ENCODE measurements at regions of chr1 and their contacts with region 1.

Region 1: GRCh38 chr1:31789259-31790065 is 25.3 kb upstream of the ADGRB2 start:
- DNase-seq: peak; percentile 91
- H3K4me3 ChIP-seq: peak overlapping the region; percentile 4 to 78 (median 55)
- H3K27ac ChIP-seq: no peak overlapping the region
- H3K4me1 ChIP-seq: peaks cover 4% of the 10 kb centered on the region
- H3K27me3 ChIP-seq: no peaks in the 10 kb centered on the region
- CTCF ChIP-seq: peak; percentile 70 to 93
- POLR2A ChIP-seq: peak; percentile 32

Region 2: GRCh38 chr1:31182352-31182751 is 607.1 kb before region 1 on chr1:
- CTCF ChIA-PET with region 1: interaction called, 8 read pairs
- POLR2A ChIA-PET with region 1: no interaction called
- dilution Hi-C with region 1: no loop called
- intact Hi-C with region 1: loop called (anchors 2 kb)
- DNase-seq: peak; percentile 68
- H3K4me3 ChIP-seq: no peak overlapping the region
- H3K27ac ChIP-seq: no peak overlapping the region
- H3K4me1 ChIP-seq: no peaks in the 10 kb centered on the region
- H3K27me3 ChIP-seq: peaks cover 3 to 4% of the 10 kb centered on the region in 2 experiments
- CTCF ChIP-seq: peak; percentile 7 to 25
- POLR2A ChIP-seq: no peak

Region 3: GRCh38 chr1:31564134-31564989 is 225.1 kb before region 1 on chr1:
- CTCF ChIA-PET with region 1: interaction called, 3 read pairs
- POLR2A ChIA-PET with region 1: no interaction called
- dilution Hi-C with region 1: no loop called
- intact Hi-C with region 1: loop called (anchors 2 kb)
- DNase-seq: peak; percentile 83
- H3K4me3 ChIP-seq: no peak overlapping the region
- H3K27ac ChIP-seq: no peak overlapping the region
- H3K4me1 ChIP-seq: peaks cover 19% of the 10 kb centered on the region
- H3K27me3 ChIP-seq: no peaks in the 10 kb centered on the region
- CTCF ChIP-seq: peak; percentile 74 to 76
- POLR2A ChIP-seq: no peak

Region 4: DNA sequence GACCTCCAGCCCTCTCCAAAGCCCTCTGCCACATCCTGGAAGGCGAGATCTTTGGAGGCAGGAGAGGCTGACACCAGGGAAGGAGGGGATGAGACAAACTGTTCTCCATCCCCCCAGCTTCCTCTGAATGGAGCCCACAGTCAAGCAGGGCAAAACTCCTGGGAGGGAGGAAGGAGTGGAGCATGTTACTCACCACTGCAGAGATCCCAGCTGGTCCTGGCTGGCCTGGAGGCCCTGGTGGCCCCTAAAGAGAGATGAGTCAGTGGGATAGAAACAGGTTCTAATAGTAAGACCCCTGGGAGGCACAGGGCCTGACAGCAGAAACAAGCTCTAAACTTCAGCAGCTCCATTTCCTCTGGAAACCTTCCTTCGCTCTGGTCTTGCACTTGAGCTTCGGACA is 130.7 kb before region 1 on chr1:
- CTCF ChIA-PET with region 1: interaction called, 76 read pairs
- POLR2A ChIA-PET with region 1: interaction called, 3 read pairs
- dilution Hi-C with region 1: no loop called
- intact Hi-C with region 1: no loop called
- DNase-seq: no peak
- H3K4me3 ChIP-seq: no peak overlapping the region
- H3K27ac ChIP-seq: no peak overlapping the region
- H3K4me1 ChIP-seq: no peaks in the 10 kb centered on the region
- H3K27me3 ChIP-seq: no peaks in the 10 kb centered on the region
- CTCF ChIP-seq: no peak
- POLR2A ChIP-seq: no peak

Region 5: GRCh38 chr1:31705080-31705866 is 84.2 kb before region 1 on chr1:
- CTCF ChIA-PET with region 1: interaction called, 14 read pairs
- POLR2A ChIA-PET with region 1: no interaction called
- dilution Hi-C with region 1: no loop called
- intact Hi-C with region 1: no loop called
- DNase-seq: no peak
- H3K4me3 ChIP-seq: no peak overlapping the region
- H3K27ac ChIP-seq: no peak overlapping the region
- H3K4me1 ChIP-seq: peaks cover 9% of the 10 kb centered on the region
- H3K27me3 ChIP-seq: peaks cover 0 to 3% of the 10 kb centered on the region in 2 experiments
- CTCF ChIP-seq: peak; percentile 5 to 12
- POLR2A ChIP-seq: no peak

Region 6: DNA sequence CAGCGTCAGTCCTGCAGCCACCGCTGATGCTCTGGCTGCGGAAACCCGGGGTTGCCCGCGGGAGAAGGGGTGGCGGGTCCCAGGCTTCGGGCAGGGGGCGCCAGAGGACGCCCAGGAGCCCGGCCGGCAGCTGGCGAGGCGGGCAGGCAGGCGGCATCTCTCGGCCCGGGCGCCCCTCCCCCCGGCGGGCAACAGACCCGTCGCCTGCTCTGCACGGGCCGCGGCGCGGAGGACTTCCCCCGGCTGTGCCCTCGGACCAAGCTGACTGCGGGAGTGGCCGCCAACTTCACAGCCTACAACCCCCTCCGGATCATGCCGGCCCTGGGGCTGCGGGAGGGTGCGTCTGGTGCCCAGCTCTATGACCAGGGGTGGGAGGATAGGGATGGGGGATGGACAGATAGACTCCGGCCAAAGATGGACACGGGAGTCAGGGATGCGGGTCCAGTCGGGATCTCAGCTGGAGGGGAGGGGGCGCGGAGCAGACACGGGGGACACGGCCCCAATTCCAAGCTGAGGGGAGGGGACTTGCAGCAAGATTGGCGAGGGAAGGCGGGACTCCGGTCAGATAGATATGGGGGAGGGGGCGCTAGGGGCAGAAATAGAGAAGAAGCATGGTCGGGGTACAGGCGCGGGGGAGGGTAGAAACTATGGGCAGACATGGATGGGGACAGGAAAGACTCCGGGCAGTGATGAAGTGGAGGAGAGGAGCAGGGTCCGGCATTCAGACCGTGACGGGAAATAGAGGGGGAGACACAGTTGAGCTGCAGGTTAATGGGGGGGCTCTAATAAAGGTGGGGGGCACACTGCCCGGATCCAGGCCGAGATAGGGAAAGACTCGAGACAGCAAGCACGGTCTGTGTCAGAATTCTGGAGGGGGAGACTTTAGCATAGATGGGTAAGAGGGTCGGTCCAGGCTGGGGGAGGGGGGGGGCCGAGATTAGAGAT is 26.5 kb before region 1 on chr1:
- CTCF ChIA-PET with region 1: interaction called, 102 read pairs
- POLR2A ChIA-PET with region 1: no interaction called
- dilution Hi-C with region 1: no loop called
- intact Hi-C with region 1: loop called (anchors 1 kb)
- DNase-seq: peak; percentile 63
- H3K4me3 ChIP-seq: peak overlapping the region; percentile 40 to 42 (median 42)
- H3K27ac ChIP-seq: no peak overlapping the region
- H3K4me1 ChIP-seq: peaks cover 26% of the 10 kb centered on the region
- H3K27me3 ChIP-seq: peaks cover 3 to 4% of the 10 kb centered on the region in 2 experiments
- CTCF ChIP-seq: peak; percentile 55 to 78
- POLR2A ChIP-seq: no peak

Region 7: GRCh38 chr1:31822766-31823165 is 33.3 kb after region 1 on chr1:
- CTCF ChIA-PET with region 1: no interaction called
- POLR2A ChIA-PET with region 1: no interaction called
- dilution Hi-C with region 1: no loop called
- intact Hi-C with region 1: no loop called
- DNase-seq: no peak
- H3K4me3 ChIP-seq: no peak overlapping the region
- H3K27ac ChIP-seq: no peak overlapping the region
- H3K4me1 ChIP-seq: no peaks in the 10 kb centered on the region
- H3K27me3 ChIP-seq: no peaks in the 10 kb centered on the region
- CTCF ChIP-seq: no peak
- POLR2A ChIP-seq: no peak

Region 8: GRCh38 chr1:31849653-31850052 is 60.2 kb after region 1 on chr1:
- CTCF ChIA-PET with region 1: no interaction called
- POLR2A ChIA-PET with region 1: no interaction called
- dilution Hi-C with region 1: no loop called
- intact Hi-C with region 1: no loop called
- DNase-seq: no peak
- H3K4me3 ChIP-seq: no peak overlapping the region
- H3K27ac ChIP-seq: no peak overlapping the region
- H3K4me1 ChIP-seq: no peaks in the 10 kb centered on the region
- H3K27me3 ChIP-seq: peaks cover 0 to 1% of the 10 kb centered on the region in 2 experiments
- CTCF ChIP-seq: no peak
- POLR2A ChIP-seq: no peak

Region 9: GRCh38 chr1:32005522-32005921 is 216.1 kb after region 1 on chr1:
- CTCF ChIA-PET with region 1: interaction called, 11 read pairs
- POLR2A ChIA-PET with region 1: no interaction called
- dilution Hi-C with region 1: no loop called
- intact Hi-C with region 1: no loop called
- DNase-seq: no peak
- H3K4me3 ChIP-seq: no peak overlapping the region
- H3K27ac ChIP-seq: no peak overlapping the region
- H3K4me1 ChIP-seq: peaks cover 14% of the 10 kb centered on the region
- H3K27me3 ChIP-seq: no peaks in the 10 kb centered on the region
- CTCF ChIP-seq: no peak
- POLR2A ChIP-seq: no peak

Region 10: DNA sequence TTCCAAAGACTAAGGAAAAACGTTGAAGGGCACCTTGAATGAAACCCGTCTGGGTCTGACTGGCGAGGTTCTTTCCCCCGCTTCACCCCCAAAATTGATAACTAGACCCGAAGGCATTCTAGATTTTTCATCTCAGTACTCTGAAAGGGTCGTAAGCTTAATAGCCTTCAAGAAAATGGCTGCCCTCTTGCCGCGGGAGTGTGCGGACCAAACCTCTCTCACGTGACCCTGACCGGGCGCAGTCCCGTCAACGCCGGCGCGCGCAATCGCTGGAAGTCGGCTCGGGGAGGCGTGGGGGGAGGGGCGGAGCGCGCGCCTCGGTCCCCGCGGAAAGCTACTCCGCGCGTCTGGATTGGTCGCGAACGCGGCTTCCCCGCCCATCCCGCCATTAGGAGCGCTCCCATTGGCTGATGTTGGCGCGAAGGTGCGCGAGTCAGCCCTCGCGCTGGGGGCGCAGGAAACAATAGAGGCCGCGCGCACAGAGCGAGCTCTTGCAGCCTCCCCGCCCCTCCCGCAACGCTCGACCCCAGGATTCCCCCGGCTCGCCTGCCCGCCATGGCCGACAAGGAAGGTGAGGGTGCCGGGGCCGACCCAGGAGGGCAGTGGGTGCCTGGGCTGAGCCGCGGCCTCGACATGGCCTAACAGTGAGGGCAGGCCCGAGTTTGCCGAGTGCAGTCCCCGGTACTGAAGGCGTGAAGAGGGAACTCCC is 861.4 kb after region 1 on chr1 and contains the start of gene RBBP4:
- CTCF ChIA-PET with region 1: no interaction called
- POLR2A ChIA-PET with region 1: no interaction called
- dilution Hi-C with region 1: no loop called
- intact Hi-C with region 1: no loop called
- DNase-seq: peak; percentile 98
- H3K4me3 ChIP-seq: peak within 1 kb of the TSS; percentile 65 to 90 (median 68)
- H3K27ac ChIP-seq: peak within 1 kb of the TSS; percentile 95
- H3K4me1 ChIP-seq: peaks cover 18% of the 10 kb centered on the region
- H3K27me3 ChIP-seq: no peaks in the 10 kb centered on the region
- CTCF ChIP-seq: no peak
- POLR2A ChIP-seq: peak; percentile 85
- total RNA-seq, gene RBBP4: 228 and 241 TPM in 2 replicates